ENCODE measurements at regions of chr14 and their contacts with region 1.

Region 1: DNA sequence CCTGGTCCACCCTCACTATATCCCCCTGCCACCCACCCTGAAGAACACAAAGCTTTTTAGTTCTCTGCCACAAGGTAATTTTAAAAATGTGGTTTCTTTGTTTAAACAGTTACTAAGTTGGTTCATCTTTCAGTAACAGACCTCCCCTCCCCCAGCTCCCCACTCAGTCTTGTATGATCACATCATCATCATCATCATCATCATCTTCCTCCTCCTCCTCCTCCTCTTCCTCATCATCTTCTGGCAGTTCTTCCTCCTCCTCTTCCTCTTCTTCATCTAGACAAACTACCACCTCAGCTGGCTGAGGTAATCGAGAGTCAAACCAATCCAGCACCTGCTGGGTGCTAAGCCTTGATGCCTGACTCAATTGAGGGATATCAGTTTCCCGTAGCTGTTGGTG is 10.5 kb downstream of the HOMEZ start:
- DNase-seq: no peak
- ATAC-seq: peak in 1 of 4 donors; percentile 30
- H3K4me3 ChIP-seq: no peak overlapping the region
- H3K27ac ChIP-seq: no peak overlapping the region
- H3K4me1 ChIP-seq: peaks cover 4% of the 10 kb centered on the region
- H3K27me3 ChIP-seq: no peaks in the 10 kb centered on the region
- CTCF ChIP-seq: no peak

Region 2: GRCh38 chr14:23114669-23115491 is 160.5 kb before region 1 on chr14:
- intact Hi-C with region 1: loop called in 1 of 2 experiments (anchors 5 kb)
- DNase-seq: peak; percentile 52 to 66
- ATAC-seq: peak; percentile 78 to 85 (median 80)
- H3K4me3 ChIP-seq: no peak overlapping the region
- H3K27ac ChIP-seq: no peak overlapping the region
- H3K4me1 ChIP-seq: peaks cover 8% of the 10 kb centered on the region
- H3K27me3 ChIP-seq: peaks cover 0 to 7% (median 3%) of the 10 kb centered on the region in 3 donors
- CTCF ChIP-seq: no peak

Region 3: DNA sequence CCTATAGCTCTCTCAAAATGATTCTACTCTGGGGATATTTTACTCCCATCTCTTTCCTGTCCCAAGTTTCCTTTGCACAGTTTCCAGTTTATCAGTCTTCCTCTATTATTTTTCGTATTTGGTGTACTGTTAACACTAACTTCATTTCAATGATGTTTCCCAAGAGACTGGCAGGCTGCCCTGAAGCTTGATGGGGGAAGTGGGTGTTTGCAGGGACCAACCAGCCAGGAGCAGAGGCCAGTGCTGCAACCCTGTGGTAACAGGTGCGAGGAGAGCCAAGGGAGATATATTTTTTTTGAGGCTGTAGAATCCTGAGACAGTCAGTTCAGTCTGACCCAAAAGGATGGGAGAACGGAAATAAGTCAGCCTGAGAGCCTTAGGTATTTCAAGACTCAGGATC is 144.5 kb before region 1 on chr14:
- intact Hi-C with region 1: no loop called
- DNase-seq: no peak
- ATAC-seq: peak in 1 of 4 donors; percentile 43
- H3K4me3 ChIP-seq: no peak overlapping the region
- H3K27ac ChIP-seq: peak overlapping the region; percentile 13
- H3K4me1 ChIP-seq: peaks cover 23% of the 10 kb centered on the region
- H3K27me3 ChIP-seq: no peaks in the 10 kb centered on the region
- CTCF ChIP-seq: no peak

Region 4: DNA sequence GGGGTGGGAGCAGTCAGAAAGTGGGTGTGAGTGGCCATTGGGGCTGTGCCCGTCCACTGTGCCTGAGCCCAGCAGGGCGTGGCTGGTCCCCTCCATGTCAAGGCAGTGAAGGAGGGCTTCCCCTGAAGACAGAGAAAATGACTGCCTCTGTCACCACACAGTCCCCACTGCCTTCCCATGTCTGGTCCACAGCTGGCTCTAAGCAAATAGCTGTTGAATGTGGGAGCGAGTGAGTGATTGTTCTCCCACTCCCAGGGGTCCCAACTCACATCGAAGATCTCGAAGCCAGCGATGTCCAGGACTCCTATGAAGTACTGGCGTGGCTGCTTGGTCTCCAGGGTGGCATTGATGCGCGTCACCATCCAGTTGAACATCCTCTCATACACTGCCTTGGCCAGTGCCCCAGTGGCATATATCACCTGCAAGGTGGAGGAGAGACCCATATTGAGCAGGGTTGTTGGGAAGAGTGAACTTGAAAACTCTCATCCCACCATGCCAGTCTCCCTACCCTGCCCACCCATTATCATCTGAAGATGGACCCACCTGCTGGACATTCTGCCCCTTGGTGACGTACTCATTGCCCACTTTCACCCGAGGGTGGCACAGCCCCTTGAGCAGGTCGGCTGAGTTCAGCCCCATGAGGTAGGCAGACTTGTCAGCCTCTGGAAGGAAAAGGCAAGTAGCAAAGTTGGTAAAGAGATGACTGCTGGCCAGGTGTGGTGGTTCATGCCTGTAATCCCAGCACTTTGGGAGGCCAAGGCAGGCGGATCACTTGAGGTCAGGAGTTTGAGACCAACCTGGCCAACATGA is 153.5 kb after region 1 on chr14:
- intact Hi-C with region 1: no loop called
- DNase-seq: no peak
- ATAC-seq: no peak
- H3K4me3 ChIP-seq: no peak overlapping the region
- H3K27ac ChIP-seq: no peak overlapping the region
- H3K4me1 ChIP-seq: peaks cover 2% of the 10 kb centered on the region
- H3K27me3 ChIP-seq: no peaks in the 10 kb centered on the region
- CTCF ChIP-seq: no peak

Measured in psoas muscle (tissue), 8 donors.